Endothelial cell of umbilical vein (primary cell): ENCODE measurements at regions of chr5 and their contacts with region 1.

Region 1: GRCh38 chr5:76790632-76791290 is 28.1 kb upstream of the F2RL1 start:
- DNase-seq: peak; percentile 98
- H3K4me3 ChIP-seq: no peak overlapping the region
- H3K27ac ChIP-seq: peak overlapping the region; percentile 94
- H3K4me1 ChIP-seq: peaks cover 55% of the 10 kb centered on the region
- H3K27me3 ChIP-seq: no peaks in the 10 kb centered on the region
- CTCF ChIP-seq: no peak
- POLR2A ChIP-seq: peak; percentile 31

Region 2: DNA sequence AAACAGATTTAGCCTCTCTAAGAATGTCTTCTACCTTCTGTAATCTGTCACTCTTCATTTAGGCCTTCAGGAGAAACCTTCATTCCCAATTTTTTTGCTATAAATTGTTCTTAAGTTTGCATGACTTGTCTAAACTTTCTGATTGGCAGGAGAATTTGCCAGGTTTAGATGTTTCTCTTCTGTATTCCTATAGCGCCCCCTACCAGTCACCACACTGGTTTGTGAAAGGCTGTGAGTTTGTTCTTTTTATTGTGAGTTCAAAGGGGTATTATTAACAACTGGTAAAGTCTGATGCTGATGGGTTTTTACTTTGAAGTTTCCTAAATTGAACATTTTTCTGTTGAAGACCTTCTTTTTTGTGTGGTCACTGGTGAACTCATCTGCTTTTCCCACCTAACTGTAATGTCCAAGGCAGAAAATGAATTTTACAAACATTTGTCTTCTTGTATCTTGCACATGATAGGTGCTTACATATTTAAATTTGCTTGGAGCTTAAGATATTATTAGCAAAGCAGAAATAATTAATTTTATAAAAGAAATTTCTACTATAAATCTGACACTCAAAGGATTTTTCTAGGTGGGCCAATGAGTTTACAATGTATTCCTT is 149.1 kb before region 1 on chr5:
- CTCF ChIA-PET with region 1: no interaction called
- POLR2A ChIA-PET with region 1: no interaction called
- dilution Hi-C with region 1: no loop called
- intact Hi-C with region 1: loop called (anchors 1 kb)
- DNase-seq: peak; percentile 85
- H3K4me3 ChIP-seq: no peak overlapping the region
- H3K27ac ChIP-seq: peak overlapping the region; percentile 84
- H3K4me1 ChIP-seq: peaks cover 34% of the 10 kb centered on the region
- H3K27me3 ChIP-seq: no peaks in the 10 kb centered on the region
- CTCF ChIP-seq: peak; percentile 66 to 72
- POLR2A ChIP-seq: no peak

Region 3: GRCh38 chr5:76736679-76737556 is 53.8 kb before region 1 on chr5:
- CTCF ChIA-PET with region 1: interaction called, 4 read pairs
- POLR2A ChIA-PET with region 1: no interaction called
- dilution Hi-C with region 1: no loop called
- intact Hi-C with region 1: loop called (anchors 1 kb)
- DNase-seq: peak; percentile 40
- H3K4me3 ChIP-seq: no peak overlapping the region
- H3K27ac ChIP-seq: peak overlapping the region; percentile 40
- H3K4me1 ChIP-seq: peaks cover 23% of the 10 kb centered on the region
- H3K27me3 ChIP-seq: no peaks in the 10 kb centered on the region
- CTCF ChIP-seq: no peak
- POLR2A ChIP-seq: peak; percentile 52

Region 4: DNA sequence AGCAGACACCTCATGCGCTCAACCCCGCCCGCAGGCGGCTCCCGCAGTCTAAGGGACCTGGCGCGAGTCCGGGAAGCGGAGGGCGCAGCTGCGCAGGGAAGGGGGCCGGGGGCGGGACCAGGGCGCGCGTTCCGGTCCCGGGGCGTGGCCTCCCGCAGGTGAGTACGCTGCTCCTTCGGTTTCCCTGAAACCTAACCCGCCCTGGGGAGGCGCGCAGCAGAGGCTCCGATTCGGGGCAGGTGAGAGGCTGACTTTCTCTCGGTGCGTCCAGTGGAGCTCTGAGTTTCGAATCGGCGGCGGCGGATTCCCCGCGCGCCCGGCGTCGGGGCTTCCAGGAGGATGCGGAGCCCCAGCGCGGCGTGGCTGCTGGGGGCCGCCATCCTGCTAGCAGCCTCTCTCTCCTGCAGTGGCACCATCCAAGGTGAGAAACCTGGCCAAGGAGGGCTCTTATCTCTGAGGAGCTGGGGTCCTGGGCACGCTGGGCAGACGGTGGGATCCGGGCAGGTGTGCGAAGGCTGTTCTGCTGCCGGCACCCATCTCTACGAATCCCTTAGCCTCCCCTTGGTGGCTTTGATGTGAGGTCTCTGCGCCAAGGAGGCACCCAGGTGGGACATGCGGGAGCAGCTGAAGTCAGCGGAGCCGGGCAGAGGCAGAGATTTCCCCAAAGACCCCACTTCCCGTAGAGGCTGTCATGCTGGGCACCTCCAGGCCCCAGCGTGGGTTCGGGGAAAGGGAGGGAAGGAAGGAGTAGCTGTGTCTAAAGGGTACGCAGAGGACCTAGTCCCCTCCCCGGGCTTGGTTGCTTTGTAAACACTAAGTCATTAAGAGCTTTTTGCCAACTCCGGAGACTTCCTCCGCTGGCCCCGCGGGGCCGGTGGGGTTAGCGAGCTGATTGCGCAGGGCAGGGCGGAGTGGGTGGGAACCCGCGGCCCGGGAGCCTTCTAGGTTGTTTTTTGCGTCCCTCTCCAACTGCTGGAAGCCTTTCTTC is 28.4 kb after region 1 on chr5 and contains the start of gene F2RL1:
- CTCF ChIA-PET with region 1: interaction called, 31 read pairs
- POLR2A ChIA-PET with region 1: interaction called, 6 read pairs
- dilution Hi-C with region 1: no loop called
- intact Hi-C with region 1: loop called (anchors 1 kb)
- DNase-seq: peak; percentile 61
- H3K4me3 ChIP-seq: peak within 1 kb of the TSS; percentile 68 to 82 (median 80)
- H3K27ac ChIP-seq: peak within 1 kb of the TSS; percentile 75
- H3K4me1 ChIP-seq: peaks cover 21% of the 10 kb centered on the region
- H3K27me3 ChIP-seq: no peaks in the 10 kb centered on the region
- CTCF ChIP-seq: no peak
- POLR2A ChIP-seq: no peak
- total RNA-seq, gene F2RL1: 21.9 and 42.6 TPM in 2 replicates

Region 5: GRCh38 chr5:76971516-76971915 is 180.8 kb after region 1 on chr5:
- CTCF ChIA-PET with region 1: no interaction called
- POLR2A ChIA-PET with region 1: no interaction called
- dilution Hi-C with region 1: no loop called
- intact Hi-C with region 1: no loop called
- DNase-seq: no peak
- H3K4me3 ChIP-seq: no peak overlapping the region
- H3K27ac ChIP-seq: no peak overlapping the region
- H3K4me1 ChIP-seq: no peaks in the 10 kb centered on the region
- H3K27me3 ChIP-seq: peaks cover 4 to 7% of the 10 kb centered on the region in 2 experiments
- CTCF ChIP-seq: no peak
- POLR2A ChIP-seq: no peak

Region 6: DNA sequence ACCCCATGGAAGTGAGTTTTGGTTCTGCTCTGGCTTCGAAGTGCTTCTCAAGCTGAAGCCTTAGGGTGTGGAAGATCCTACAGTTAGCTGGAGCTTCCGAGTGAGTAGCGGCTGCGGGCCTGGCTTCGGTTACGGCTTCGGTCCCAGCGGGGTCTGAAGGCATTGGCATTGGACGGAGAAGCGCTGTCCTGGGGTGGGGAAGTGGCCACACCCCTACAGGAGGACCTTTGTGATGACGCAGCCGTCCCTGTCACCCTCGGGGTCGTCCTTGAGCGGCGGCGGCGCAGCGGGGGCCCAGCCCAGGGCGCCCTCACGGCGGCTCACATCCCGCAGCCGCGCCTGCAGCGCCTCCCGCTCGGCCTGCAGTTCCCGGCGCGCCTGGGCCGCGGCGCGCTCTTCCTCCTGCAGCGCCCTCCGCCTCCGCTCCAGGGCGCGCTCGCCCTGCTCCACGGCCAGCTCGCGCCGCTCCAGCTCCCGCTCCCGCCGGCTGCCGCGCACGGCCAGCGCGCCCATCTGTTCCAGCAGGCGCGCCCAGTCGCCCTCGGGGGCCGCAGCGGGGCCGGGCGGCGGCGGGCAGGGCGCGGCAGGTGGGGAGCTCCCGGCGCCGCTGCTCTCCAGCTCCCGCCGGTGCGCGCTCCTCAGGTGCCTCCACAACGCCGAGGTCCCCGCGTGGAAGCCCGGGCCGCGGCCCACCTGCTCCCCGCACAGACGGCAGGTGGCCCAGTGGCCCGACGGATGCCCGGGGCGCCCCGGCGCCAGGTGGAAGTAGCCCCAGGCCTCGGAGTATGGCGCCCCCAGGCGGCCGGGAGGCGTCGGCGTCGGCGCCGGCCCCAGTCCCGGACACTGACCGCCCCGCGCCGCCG is 286.4 kb after region 1 on chr5:
- CTCF ChIA-PET with region 1: interaction called, 4 read pairs
- POLR2A ChIA-PET with region 1: no interaction called
- dilution Hi-C with region 1: no loop called
- intact Hi-C with region 1: loop called (anchors 1 kb)
- DNase-seq: peak; percentile 61
- H3K4me3 ChIP-seq: peak overlapping the region in 2 of 3 experiments; percentile 35
- H3K27ac ChIP-seq: no peak overlapping the region
- H3K4me1 ChIP-seq: peaks cover 3% of the 10 kb centered on the region
- H3K27me3 ChIP-seq: no peaks in the 10 kb centered on the region
- CTCF ChIP-seq: peak; percentile 79 to 89
- POLR2A ChIP-seq: no peak